HEK293 (cell line): ENCODE measurements at regions of chr4 and their contacts with region 1.

Region 1: DNA sequence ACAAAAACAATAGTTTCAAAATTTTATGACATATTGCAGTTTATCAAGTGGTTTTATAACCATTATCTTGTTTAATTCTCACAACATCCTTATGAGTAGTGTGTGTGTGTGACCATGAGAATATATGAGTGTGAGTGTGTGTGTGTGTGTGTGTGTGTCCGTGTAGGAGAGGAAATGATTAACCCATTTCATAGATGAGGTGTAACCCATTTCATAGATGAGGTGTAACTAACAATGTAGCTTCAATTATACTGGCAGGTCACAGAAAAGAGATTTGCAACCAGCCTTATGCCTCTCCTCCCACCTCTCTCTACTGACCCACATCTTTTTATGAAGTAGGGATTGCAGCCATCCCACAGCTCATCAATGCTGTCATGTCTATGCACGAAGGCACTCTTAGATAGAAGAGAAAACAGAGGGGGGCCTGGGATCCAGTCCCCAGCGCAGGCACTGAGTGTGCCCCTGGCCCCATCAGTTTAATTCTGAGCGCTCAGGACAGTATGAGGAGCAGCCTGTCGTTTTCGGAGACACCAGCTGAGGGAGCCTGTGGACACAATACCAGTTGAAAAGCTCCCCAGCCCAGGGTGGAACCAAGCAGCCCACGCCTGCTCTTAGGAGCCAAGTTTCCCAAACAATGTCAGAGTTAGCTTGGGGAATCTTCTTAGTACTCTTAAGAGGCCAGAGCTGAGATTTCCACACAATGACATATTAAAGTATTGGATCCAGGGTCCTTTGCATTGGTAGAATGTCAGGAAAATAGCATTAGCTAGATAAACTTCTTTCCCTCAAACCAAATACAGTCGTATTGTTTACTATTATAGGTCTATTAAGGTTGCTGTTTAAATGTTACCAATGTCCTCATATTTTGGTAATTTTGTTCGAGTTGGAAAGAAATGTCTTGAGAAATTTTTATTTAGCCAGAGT is 88.6 kb downstream of the PALLD start:
- H3K4me3 ChIP-seq: no peak overlapping the region
- H3K27ac ChIP-seq: no peak overlapping the region
- H3K4me1 ChIP-seq: peaks cover 4% of the 10 kb centered on the region; the same call in 1 of the 2 replicates
- CTCF ChIP-seq: 0 out of 2 replicates have a peak, but pooled peaks have one; percentile 30

Region 2: DNA sequence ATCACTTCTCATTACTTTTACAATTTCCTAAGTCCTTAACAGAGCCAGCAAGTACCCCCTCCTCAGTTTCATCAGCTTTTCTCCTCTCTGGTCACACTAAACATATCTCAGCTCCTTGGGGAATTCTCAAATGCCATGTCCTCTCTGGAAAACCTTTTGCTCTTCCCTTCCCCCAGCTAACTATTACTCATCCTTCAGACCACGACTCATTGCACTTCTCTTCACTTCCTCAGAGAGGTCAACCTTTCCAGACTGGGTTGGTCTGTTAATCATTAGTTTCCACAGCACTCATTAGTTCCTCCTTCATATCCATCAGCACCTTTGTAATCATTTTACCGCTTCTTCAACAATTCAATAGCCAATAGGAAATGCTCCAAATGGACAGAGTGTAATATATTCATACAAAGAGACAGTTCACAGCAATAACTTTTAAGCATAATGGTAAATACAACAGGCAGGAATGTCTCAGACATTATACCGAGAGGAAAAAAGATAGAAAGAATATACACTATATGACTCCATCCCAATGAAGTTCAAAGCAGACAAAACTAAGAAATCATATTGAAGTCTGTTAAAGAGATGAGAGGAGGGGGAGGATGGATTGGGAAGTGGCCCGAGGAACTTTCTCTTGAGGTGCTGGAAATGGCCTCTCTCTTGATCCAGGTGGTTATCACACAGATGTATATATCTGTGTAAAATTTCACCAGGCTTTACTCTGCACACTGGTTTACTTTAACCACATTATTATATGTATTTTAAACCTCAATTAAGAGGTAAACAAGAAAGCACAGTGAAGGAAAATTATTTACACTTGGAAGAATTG is 144.8 kb before region 1 on chr4:
- CTCF ChIA-PET with region 1: no interaction called
- POLR2A ChIA-PET with region 1: no interaction called
- H3K4me3 ChIP-seq: no peak overlapping the region
- H3K27ac ChIP-seq: no peak overlapping the region
- H3K4me1 ChIP-seq: no peaks in the 10 kb centered on the region
- CTCF ChIP-seq: no peak

Region 3: DNA sequence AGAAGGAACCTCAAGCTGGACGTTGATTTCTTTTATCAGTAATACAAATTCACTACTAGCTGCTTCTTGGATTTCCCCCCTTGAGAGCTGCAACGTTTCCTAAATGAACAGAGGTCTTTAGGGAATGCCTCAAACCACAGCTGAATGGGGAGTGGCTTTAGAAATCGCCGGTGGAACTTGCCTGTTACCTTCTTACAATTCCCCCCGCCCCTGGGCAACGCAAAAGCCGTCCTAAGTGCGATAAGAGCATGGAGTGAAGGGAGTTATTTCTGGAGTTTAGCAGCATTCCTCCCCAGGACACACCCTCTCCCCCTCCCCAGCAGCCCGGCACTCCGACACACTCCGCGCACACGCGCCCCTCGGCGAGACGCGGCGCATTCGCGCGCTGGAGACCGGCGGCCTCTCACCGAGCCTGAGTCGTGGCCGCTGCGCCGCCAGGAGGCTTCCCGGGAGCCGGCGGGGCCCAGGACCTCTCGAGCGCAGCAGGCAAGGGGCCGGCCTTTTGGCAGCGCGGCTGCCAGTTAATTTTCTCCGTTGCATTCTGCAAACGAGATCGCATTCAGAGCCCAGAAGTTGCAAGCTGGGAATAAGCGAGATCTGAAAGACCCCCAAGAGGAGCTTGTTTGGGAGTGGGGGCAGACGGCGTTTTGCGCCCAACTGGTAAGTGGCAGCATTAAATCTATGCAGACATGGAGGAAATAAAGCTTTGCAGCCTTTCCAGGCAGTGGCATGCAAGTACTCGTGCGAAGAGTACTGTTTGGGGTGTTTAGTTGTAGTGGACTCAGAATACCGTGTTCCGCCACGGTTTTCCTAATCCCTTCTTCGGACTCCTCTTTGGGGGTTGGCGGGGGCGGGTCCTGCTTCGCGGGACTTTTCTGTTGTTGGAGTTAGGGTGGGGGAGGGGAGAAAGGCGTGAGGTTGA is 46.1 kb after region 1 on chr4:
- CTCF ChIA-PET with region 1: interaction called, 24 read pairs
- POLR2A ChIA-PET with region 1: interaction called, 6 read pairs
- H3K4me3 ChIP-seq: peak overlapping the region; percentile 58
- H3K27ac ChIP-seq: peak overlapping the region; percentile 77
- H3K4me1 ChIP-seq: peaks cover 19% of the 10 kb centered on the region; the same call in 1 of the 2 replicates
- CTCF ChIP-seq: peak; percentile 75

Region 4: GRCh38 chr4:168710353-168710946 is 125.0 kb after region 1 on chr4:
- CTCF ChIA-PET with region 1: interaction called, 12 read pairs
- POLR2A ChIA-PET with region 1: no interaction called
- H3K4me3 ChIP-seq: no peak overlapping the region
- H3K27ac ChIP-seq: no peak overlapping the region
- H3K4me1 ChIP-seq: peaks cover 6% of the 10 kb centered on the region
- CTCF ChIP-seq: no peak

Region 5: GRCh38 chr4:168917138-168917779 is 331.8 kb after region 1 on chr4:
- CTCF ChIA-PET with region 1: interaction called, 12 read pairs
- POLR2A ChIA-PET with region 1: no interaction called
- H3K4me3 ChIP-seq: no peak overlapping the region
- H3K27ac ChIP-seq: no peak overlapping the region
- H3K4me1 ChIP-seq: no peaks in the 10 kb centered on the region
- CTCF ChIP-seq: no peak